ENCODE measurements at regions of chr1 and their contacts with region 1.

Region 1: GRCh38 chr1:32063261-32063681 is 9.5 kb upstream of the TMEM39B start:
- DNase-seq: peak; percentile 38
- H3K4me3 ChIP-seq: no peak overlapping the region
- H3K27ac ChIP-seq: peak overlapping the region; percentile 89
- H3K27me3 ChIP-seq: no peaks in the 10 kb centered on the region
- CTCF ChIP-seq: peak; percentile 67

Region 2: GRCh38 chr1:32045772-32046171 is 17.5 kb before region 1 on chr1:
- CTCF ChIA-PET with region 1: interaction called, 12 read pairs
- POLR2A ChIA-PET with region 1: interaction called, 6 read pairs
- DNase-seq: no peak
- H3K4me3 ChIP-seq: no peak overlapping the region
- H3K27ac ChIP-seq: no peak overlapping the region
- H3K27me3 ChIP-seq: no peaks in the 10 kb centered on the region
- CTCF ChIP-seq: no peak

Region 3: GRCh38 chr1:32052887-32053286 is 10.4 kb before region 1 on chr1:
- CTCF ChIA-PET with region 1: interaction called, 12 read pairs
- POLR2A ChIA-PET with region 1: interaction called, 6 read pairs
- DNase-seq: no peak
- H3K4me3 ChIP-seq: no peak overlapping the region
- H3K27ac ChIP-seq: no peak overlapping the region
- H3K27me3 ChIP-seq: no peaks in the 10 kb centered on the region
- CTCF ChIP-seq: no peak

Region 4: GRCh38 chr1:32082022-32082421 is 18.8 kb after region 1 on chr1:
- CTCF ChIA-PET with region 1: no interaction called
- POLR2A ChIA-PET with region 1: interaction called, 10 read pairs
- DNase-seq: no peak
- H3K4me3 ChIP-seq: no peak overlapping the region
- H3K27ac ChIP-seq: no peak overlapping the region
- H3K27me3 ChIP-seq: no peaks in the 10 kb centered on the region
- CTCF ChIP-seq: no peak

Region 5: DNA sequence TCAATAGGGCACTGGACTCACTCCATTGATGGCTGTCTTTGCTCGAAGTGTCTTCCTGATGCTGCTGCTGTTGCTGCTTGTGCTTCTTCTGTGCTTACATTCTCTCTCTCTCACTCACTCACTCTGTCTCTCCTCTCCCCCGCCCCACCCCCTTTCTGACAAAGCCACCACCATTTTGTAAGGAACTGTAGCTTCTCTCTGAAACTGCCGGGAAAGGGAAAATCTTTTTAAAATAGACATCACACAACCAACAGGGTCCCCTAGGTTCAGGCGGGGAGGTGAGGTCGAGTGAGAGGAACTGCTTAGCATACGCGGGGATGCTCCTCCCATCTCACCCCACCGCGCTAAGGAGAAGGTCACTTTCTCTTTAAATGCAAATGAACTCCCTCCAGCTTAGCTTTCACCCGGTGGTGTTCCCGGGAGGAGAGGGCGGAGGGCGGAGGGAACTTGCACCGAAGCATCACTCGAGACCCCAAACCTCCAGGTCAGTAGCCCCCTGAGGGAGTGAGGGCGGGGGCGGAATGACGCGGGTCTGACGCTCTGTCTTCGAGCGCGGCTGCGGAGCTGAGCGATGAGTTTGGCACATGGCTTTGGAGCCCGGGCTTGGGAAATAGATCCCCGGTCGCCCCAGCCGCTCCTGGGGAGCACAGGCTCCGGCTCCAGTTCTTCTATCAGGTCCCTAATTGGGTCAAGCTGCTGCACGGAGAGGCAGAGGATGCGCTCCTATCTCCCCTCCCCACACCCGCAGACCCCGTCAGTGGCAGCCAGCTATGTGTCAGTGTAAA is 137.1 kb after region 1 on chr1 and contains the start of gene CCDC28B:
- CTCF ChIA-PET with region 1: no interaction called
- POLR2A ChIA-PET with region 1: no interaction called
- DNase-seq: no peak
- H3K4me3 ChIP-seq: peak within 1 kb of the TSS; percentile 79
- H3K27ac ChIP-seq: peak within 1 kb of the TSS; percentile 96
- H3K27me3 ChIP-seq: no peaks in the 10 kb centered on the region
- CTCF ChIP-seq: no peak
- polyA plus RNA-seq, gene CCDC28B: 17.6 and 20.8 TPM in 2 replicates

Measured in AG04450 (cell line).